ENCODE measurements at regions of chr4 and their contacts with region 1.

Region 1: GRCh38 chr4:133483600-133484246 is 334.6 kb downstream of the PCDH10 start:
- DNase-seq: peak; percentile 63
- H3K4me3 ChIP-seq: no peak overlapping the region
- H3K27ac ChIP-seq: no peak overlapping the region
- H3K4me1 ChIP-seq: no peaks in the 10 kb centered on the region
- H3K27me3 ChIP-seq: no peaks in the 10 kb centered on the region
- CTCF ChIP-seq: peak; percentile 57

Region 2: DNA sequence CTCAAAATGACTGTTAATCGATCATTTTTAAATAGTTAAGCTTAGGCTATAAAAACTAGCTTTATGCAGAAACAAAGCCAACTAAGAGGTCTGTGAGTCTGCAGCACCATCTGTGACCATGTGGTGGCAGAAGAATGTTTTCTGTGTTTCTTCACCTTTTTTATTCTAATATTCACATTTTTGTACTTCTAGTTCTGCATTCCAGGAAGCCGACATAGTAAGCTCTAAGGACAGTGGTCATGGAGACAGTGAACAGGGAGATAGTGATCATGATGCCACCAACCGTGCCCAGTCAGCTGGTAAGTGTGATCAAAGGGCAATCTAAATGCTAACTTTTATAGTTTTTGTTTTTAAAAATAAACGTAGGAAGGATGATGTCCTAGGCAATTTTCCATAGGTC is 329.0 kb before region 1 on chr4:
- CTCF ChIA-PET with region 1: no interaction called
- POLR2A ChIA-PET with region 1: no interaction called
- intact Hi-C with region 1: loop called (anchors 2 kb)
- DNase-seq: peak; percentile 71
- H3K4me3 ChIP-seq: peak overlapping the region; percentile 63
- H3K27ac ChIP-seq: no peak overlapping the region
- H3K4me1 ChIP-seq: peaks cover 11% of the 10 kb centered on the region
- H3K27me3 ChIP-seq: no peaks in the 10 kb centered on the region
- CTCF ChIP-seq: peak; percentile 81

Region 3: DNA sequence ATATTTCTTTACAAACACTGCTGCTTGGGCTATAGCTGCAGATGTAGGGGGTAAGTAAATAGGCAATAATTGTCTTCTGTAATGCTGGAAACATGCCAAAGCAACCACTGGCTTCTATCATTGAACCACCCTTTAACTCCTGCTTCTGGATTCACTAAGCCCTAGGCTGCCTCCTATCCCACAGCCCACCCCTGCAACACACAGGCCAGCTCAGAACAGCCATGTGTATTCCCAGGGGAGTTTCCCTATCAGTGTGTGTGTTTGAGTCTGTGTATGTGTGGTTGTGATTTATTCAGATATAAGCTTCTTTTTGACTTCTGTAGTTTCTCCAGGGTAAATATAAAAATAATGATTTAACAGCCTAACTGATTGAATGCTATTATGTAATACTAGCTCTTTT is 43.3 kb before region 1 on chr4:
- CTCF ChIA-PET with region 1: no interaction called
- POLR2A ChIA-PET with region 1: no interaction called
- intact Hi-C with region 1: no loop called
- DNase-seq: peak; percentile 30
- H3K4me3 ChIP-seq: no peak overlapping the region
- H3K27ac ChIP-seq: no peak overlapping the region
- H3K4me1 ChIP-seq: peaks cover 4% of the 10 kb centered on the region
- H3K27me3 ChIP-seq: no peaks in the 10 kb centered on the region
- CTCF ChIP-seq: no peak

Region 4: GRCh38 chr4:134089885-134090284 is 606.2 kb after region 1 on chr4:
- CTCF ChIA-PET with region 1: no interaction called
- POLR2A ChIA-PET with region 1: no interaction called
- intact Hi-C with region 1: no loop called
- DNase-seq: no peak
- H3K4me3 ChIP-seq: no peak overlapping the region
- H3K27ac ChIP-seq: no peak overlapping the region
- H3K4me1 ChIP-seq: no peaks in the 10 kb centered on the region
- H3K27me3 ChIP-seq: no peaks in the 10 kb centered on the region
- CTCF ChIP-seq: no peak

Measured in A673 (cell line).